ENCODE measurements at regions of chr17 and their contacts with region 1.

Region 1: DNA sequence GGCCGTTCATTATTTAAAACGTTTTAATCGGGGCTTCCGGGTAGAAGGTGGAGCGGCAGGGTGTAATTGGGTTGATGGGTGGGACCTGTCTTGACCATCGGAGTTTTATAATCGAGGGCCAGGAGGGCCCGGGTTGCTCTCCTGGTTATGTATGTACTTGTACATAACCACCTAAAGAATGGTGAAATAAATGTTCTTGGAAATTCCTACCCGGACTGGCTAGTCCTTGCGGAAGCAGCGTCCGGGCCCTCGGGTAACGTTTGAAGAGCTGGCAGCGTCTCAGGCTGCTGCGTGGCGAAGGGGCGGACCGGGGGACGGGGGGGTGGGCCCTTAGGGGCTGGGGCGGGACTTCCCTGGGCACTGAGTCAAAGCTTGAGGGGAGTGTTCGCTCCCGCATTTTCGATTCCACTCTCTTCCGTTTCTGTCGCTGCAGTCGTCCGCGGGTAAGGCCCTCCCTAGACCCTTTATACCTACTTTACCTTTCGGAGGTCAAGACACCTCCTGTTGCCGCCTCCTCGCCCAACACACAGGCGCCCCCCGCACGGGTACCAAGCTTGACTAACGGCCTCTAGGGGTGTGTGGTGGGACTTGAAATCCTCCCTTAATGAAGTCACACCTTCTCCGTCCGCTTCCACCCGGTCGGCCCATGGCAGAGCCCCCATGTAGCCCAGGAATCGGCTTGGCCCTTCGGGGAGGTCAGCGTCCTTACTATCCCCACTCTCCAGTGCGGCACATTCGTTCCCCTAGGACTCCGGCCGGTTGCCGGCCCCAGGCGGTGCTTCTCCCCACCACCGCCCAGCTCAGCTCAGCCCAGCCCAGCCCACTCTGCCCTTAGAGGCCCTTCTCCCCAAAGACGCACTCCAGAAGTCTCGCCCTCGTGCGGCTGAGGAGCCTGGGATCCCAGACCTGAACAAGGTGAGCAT is at the start of gene TMEM106A:
- DNase-seq: peak; percentile 90
- ATAC-seq: peak; percentile 88
- H3K4me3 ChIP-seq: peak within 1 kb of the TSS; percentile 71 to 92 (median 83)
- H3K4me3 Mint-ChIP-seq: peak within 1 kb of the TSS; percentile 99
- H3K27ac ChIP-seq: peak within 1 kb of the TSS; percentile 79 to 88
- H3K27ac Mint-ChIP-seq: peak within 1 kb of the TSS; percentile 98
- H3K4me1 ChIP-seq: peaks cover 21 to 27% of the 10 kb centered on the region in 2 donors
- H3K4me1 Mint-ChIP-seq: peaks cover 35% of the 10 kb centered on the region
- H3K27me3 ChIP-seq: no peaks in the 10 kb centered on the region
- H3K27me3 Mint-ChIP-seq: no peaks in the 10 kb centered on the region
- CTCF ChIP-seq: peak; percentile 62
- total RNA-seq, gene TMEM106A: 66.0 and 66.3 TPM in 2 replicates

Region 2: DNA sequence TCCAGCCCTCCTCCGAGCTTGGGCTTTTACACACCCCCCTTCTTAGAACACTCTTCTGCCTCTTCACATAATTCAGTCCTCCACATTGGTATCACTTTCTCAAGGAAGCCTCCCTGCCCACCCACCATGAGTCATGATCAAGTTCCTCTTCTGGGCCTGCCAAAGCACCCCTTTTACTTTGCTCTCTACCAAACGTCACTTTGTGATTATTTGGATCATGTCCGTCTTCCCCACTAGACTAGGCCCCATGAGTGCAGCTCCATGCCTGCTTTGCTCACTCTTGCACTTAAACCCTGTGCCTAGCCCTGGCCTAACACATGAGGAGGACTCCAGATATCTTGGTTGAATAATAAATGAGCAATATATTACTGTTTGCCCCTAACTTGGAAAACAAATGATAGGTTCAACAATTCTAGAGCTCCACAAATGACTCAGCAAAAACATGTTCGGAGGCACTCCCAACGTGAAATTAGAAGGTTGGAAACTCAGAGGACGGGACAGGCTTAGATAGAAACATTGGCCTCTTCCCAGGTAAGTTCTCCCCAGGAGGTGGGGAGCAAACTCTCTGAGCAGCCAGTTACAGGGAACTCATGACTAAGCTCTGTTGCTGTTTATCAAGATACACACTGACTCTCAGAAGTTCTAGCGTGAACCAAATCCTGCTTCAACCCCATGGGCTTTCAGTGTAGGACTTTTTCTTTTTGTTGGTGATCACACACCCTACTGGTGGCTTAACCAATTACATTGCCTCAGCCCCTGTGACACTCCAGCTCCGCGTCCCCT is 282.8 kb before region 1 on chr17:
- CTCF ChIA-PET with region 1: no interaction called
- POLR2A ChIA-PET with region 1: no interaction called
- intact Hi-C with region 1: no loop called
- DNase-seq: peak; percentile 50
- ATAC-seq: peak; percentile 78
- H3K4me3 ChIP-seq: no peak overlapping the region
- H3K4me3 Mint-ChIP-seq: no peak overlapping the region
- H3K27ac ChIP-seq: no peak overlapping the region
- H3K27ac Mint-ChIP-seq: peak overlapping the region; percentile 47
- H3K4me1 ChIP-seq: peaks cover 8 to 10% of the 10 kb centered on the region in 2 donors
- H3K4me1 Mint-ChIP-seq: peaks cover 9% of the 10 kb centered on the region
- H3K27me3 ChIP-seq: no peaks in the 10 kb centered on the region
- H3K27me3 Mint-ChIP-seq: no peaks in the 10 kb centered on the region
- CTCF ChIP-seq: peak; percentile 66

Region 3: DNA sequence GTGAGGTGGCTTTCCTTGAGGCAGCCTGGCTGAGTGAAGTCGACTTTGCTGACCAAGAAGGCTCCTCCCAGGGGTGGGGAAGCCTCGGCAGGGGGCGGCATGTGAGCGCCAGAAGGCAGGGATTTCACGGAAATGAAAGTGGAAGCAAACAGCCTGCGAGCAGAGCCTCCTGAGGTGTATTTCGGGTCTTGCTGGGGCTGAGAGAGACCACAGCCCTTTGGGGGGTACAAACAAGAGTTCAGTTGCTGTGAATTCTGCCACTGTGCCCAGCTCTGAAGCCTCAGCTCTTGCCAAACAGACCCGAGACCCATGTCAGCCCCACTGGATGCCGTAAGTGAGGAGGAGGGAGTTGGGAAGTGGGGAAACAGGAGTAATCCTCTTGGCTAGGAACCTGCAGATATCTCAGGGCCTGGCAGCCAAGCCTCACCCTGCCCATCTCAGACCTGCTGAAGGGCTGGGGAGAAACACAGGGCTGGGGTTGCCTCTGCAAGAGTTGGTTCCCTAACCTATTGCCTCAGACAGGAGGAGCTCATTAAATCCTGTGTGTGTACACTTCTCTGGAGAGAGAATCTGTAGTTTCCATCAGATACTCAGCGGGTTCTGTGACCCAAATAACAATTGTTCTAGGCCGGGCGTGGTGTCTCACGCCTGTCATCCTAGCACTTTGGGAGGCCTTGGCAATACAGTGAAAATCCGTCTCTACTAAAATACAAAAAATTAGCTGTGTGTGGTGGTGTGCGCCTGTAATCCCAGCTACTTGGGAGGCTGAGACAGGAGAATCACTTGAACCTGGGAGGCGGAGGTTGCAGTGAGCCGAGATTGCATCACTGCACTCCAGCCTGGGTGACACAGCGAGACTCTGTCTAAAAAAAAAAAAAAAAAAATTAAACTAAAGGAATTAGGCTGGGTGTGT is 204.8 kb before region 1 on chr17 and contains the start of gene IFI35:
- CTCF ChIA-PET with region 1: no interaction called
- POLR2A ChIA-PET with region 1: no interaction called
- intact Hi-C with region 1: loop called (anchors 1 kb)
- DNase-seq: peak; percentile 89
- ATAC-seq: peak; percentile 99
- H3K4me3 ChIP-seq: peak within 1 kb of the TSS; percentile 73 to 91 (median 82)
- H3K4me3 Mint-ChIP-seq: peak within 1 kb of the TSS; percentile 100
- H3K27ac ChIP-seq: peak within 1 kb of the TSS; percentile 83 to 93
- H3K27ac Mint-ChIP-seq: peak within 1 kb of the TSS; percentile 100
- H3K4me1 ChIP-seq: peaks cover 8 to 13% of the 10 kb centered on the region in 2 donors
- H3K4me1 Mint-ChIP-seq: peaks cover 16% of the 10 kb centered on the region
- H3K27me3 ChIP-seq: no peaks in the 10 kb centered on the region
- H3K27me3 Mint-ChIP-seq: no peaks in the 10 kb centered on the region
- CTCF ChIP-seq: peak; percentile 64
- total RNA-seq, gene IFI35: 34.7 and 37.2 TPM in 2 replicates

Region 4: DNA sequence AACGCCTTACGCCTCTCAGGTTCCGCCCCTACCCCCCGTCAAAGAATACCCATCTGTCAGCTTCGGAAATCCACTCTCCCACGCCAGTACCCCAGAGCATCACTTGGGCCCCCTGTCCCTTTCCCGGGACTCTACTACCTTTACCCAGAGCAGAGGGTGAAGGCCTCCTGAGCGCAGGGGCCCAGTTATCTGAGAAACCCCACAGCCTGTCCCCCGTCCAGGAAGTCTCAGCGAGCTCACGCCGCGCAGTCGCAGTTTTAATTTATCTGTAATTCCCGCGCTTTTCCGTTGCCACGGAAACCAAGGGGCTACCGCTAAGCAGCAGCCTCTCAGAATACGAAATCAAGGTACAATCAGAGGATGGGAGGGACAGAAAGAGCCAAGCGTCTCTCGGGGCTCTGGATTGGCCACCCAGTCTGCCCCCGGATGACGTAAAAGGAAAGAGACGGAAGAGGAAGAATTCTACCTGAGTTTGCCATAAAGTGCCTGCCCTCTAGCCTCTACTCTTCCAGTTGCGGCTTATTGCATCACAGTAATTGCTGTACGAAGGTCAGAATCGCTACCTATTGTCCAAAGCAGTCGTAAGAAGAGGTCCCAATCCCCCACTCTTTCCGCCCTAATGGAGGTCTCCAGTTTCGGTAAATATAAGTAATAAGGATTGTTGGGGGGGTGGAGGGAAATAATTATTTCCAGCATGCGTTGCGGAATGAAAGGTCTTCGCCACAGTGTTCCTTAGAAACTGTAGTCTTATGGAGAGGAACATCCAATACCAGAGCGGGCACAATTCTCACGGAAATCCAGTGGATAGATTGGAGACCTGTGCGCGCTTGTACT is 86.4 kb before region 1 on chr17 and contains the start of gene BRCA1:
- CTCF ChIA-PET with region 1: no interaction called
- POLR2A ChIA-PET with region 1: no interaction called
- intact Hi-C with region 1: loop called (anchors 1 kb)
- DNase-seq: peak; percentile 98
- ATAC-seq: peak; percentile 100
- H3K4me3 ChIP-seq: peak within 1 kb of the TSS; percentile 68 to 97 (median 92)
- H3K4me3 Mint-ChIP-seq: peak within 1 kb of the TSS; percentile 91
- H3K27ac ChIP-seq: peak within 1 kb of the TSS; percentile 60 to 82
- H3K27ac Mint-ChIP-seq: peak within 1 kb of the TSS; percentile 91
- H3K4me1 ChIP-seq: peaks cover 12 to 24% of the 10 kb centered on the region in 2 donors
- H3K4me1 Mint-ChIP-seq: peaks cover 31% of the 10 kb centered on the region
- H3K27me3 ChIP-seq: no peaks in the 10 kb centered on the region
- H3K27me3 Mint-ChIP-seq: no peaks in the 10 kb centered on the region
- CTCF ChIP-seq: no peak
- total RNA-seq, gene BRCA1: 7.2 and 9.0 TPM in 2 replicates

Region 5: DNA sequence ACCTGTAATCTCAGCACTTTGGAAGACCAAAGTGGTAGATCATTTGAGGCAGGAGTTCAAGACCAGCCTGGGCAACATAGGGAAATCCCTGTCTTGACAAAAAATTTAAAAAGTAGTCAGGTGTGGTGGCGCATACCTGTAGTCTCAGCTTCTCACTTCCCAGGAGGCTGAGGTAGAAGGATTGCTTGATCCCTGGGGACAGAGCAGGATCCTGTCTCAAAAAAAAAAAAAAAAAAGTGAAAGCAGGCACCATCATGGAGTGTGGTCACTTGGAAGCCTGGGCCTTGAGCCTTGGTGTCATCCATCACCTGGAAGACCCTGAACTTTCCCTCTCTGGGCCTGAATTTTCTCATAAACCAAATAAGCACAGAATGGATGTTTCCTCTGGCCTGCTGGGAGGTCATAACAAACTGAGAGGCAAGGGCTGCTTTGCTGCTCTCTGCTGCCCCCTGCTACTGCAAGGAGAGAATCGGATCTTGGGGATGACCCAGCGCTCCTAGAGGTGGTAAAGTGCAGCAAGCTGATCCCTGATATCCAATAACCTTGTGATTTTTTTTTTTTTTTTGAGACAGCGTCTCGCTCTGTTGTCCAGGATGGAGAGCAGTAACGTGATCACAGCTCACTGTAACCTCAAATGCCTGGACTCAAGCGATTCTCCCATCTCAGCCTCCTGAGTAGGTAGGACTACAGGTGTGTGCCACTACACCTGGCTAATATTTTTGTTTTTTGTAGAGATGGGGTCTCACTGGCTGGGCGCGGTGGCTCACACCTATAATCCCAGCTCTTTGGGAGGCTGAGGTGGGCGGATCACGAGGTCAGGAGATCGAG is 98.0 kb after region 1 on chr17:
- CTCF ChIA-PET with region 1: interaction called, 15 read pairs
- POLR2A ChIA-PET with region 1: interaction called, 115 read pairs
- intact Hi-C with region 1: no loop called
- DNase-seq: peak; percentile 55
- ATAC-seq: no peak
- H3K4me3 ChIP-seq: no peak overlapping the region
- H3K4me3 Mint-ChIP-seq: no peak overlapping the region
- H3K27ac ChIP-seq: peak overlapping the region in 1 of 2 donors; percentile 49
- H3K27ac Mint-ChIP-seq: peak overlapping the region; percentile 32
- H3K4me1 ChIP-seq: no peaks in the 10 kb centered on the region
- H3K4me1 Mint-ChIP-seq: peaks cover 5% of the 10 kb centered on the region
- H3K27me3 ChIP-seq: no peaks in the 10 kb centered on the region
- H3K27me3 Mint-ChIP-seq: no peaks in the 10 kb centered on the region
- CTCF ChIP-seq: no peak

Region 6: DNA sequence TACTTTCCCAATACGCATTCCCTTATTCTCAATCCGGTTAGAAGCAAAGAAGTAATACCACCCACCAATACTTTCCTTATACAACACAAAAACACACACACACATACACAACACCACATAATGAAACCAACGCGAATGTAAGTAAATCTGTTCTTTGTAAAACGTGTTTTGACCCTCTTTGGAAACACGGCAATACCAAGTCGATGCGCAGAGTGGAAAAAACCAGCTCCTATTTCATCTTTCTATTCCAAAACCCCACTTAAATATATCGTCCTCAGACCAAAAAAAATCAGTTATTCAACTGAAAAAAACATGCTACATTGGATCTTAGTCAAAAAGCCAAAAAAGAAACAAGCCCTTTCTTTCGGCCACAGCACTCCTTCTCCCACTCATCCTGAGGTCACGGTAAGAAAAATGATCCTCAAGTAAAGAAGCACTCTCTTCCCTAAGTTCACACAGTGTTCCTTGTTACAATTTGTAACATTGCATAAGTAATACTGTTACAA is 156.0 kb after region 1 on chr17:
- CTCF ChIA-PET with region 1: no interaction called
- POLR2A ChIA-PET with region 1: interaction called, 13 read pairs
- intact Hi-C with region 1: no loop called
- DNase-seq: no peak
- ATAC-seq: peak; percentile 40
- H3K4me3 ChIP-seq: peak overlapping the region; percentile 59 to 84 (median 64)
- H3K4me3 Mint-ChIP-seq: peak overlapping the region; percentile 99
- H3K27ac ChIP-seq: peak overlapping the region; percentile 96 to 98
- H3K27ac Mint-ChIP-seq: peak overlapping the region; percentile 100
- H3K4me1 ChIP-seq: peaks cover 33 to 50% of the 10 kb centered on the region in 2 donors
- H3K4me1 Mint-ChIP-seq: peaks cover 44% of the 10 kb centered on the region
- H3K27me3 ChIP-seq: no peaks in the 10 kb centered on the region
- H3K27me3 Mint-ChIP-seq: no peaks in the 10 kb centered on the region
- CTCF ChIP-seq: no peak

Region 7: GRCh38 chr17:43442711-43443110 is 231.0 kb after region 1 on chr17:
- CTCF ChIA-PET with region 1: no interaction called
- POLR2A ChIA-PET with region 1: no interaction called
- intact Hi-C with region 1: no loop called
- DNase-seq: no peak
- ATAC-seq: no peak
- H3K4me3 ChIP-seq: no peak overlapping the region
- H3K4me3 Mint-ChIP-seq: no peak overlapping the region
- H3K27ac ChIP-seq: no peak overlapping the region
- H3K27ac Mint-ChIP-seq: no peak overlapping the region
- H3K4me1 ChIP-seq: no peaks in the 10 kb centered on the region
- H3K4me1 Mint-ChIP-seq: no peaks in the 10 kb centered on the region
- H3K27me3 ChIP-seq: peaks cover 0 to 5% (median 0%) of the 10 kb centered on the region in 4 experiments
- H3K27me3 Mint-ChIP-seq: peaks cover 19% of the 10 kb centered on the region
- CTCF ChIP-seq: no peak